Activated T-helper 2 cell treated with anti-CD3 and anti-CD28 coated beads, Interferon-gamma antibody, Interleukin-2, Interleukin-4, amounts not matched to agents 10 μg/mL and 5 μg/mL and 100 μg/mL, durations not matched to agents 14 hours and 24 hours and 36 hours (primary cell): ENCODE measurements at regions of chr12 and their contacts with region 1.

Region 1: GRCh38 chr12:110079477-110080400 is 31.4 kb upstream of the C12orf76 start:
- DNase-seq: peak; percentile 77
- H3K4me3 Mint-ChIP-seq: peak overlapping the region; percentile 57
- H3K27ac Mint-ChIP-seq: peak overlapping the region; percentile 95
- H3K4me1 Mint-ChIP-seq: peaks cover 30% of the 10 kb centered on the region
- H3K27me3 Mint-ChIP-seq: no peaks in the 10 kb centered on the region

Region 2: DNA sequence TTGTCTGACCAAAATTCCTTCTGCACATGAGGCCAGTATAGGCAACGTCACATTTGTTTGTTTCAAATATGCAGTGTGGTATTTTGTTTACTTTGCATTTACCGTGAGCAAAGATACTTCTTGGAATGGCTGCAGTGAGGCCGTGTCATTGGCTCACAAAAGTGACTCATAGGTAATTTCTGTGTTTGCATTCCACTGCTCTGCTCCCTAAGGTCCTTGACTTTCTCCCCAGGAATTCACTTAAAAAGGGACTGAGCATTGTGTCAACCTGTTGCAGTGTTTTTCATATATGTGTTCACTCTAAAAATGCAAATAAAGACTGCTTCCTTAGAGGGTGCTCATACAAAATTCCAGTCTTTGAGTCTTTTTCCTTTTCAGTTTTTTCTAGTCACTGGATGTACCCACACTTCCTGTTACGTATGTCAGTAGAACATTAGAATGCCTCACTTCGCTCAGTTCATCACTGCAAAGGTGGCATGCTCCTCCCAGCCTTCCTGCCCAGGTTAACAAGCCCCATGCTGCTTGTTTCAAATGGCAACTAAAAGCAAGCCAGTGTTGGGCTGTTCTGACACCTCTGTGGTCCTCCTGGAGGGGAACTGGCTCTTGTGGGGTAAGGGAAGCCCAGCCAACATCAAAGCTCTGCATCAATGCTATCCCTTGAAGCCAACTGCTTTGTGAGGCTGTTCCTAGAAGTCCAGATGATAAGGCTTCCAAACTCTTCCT is 40.5 kb before region 1 on chr12:
- intact Hi-C with region 1: loop called (anchors 1 kb)
- DNase-seq: no peak
- H3K4me3 Mint-ChIP-seq: no peak overlapping the region
- H3K27ac Mint-ChIP-seq: peak overlapping the region; percentile 92
- H3K4me1 Mint-ChIP-seq: peaks cover 49% of the 10 kb centered on the region
- H3K27me3 Mint-ChIP-seq: no peaks in the 10 kb centered on the region

Region 3: DNA sequence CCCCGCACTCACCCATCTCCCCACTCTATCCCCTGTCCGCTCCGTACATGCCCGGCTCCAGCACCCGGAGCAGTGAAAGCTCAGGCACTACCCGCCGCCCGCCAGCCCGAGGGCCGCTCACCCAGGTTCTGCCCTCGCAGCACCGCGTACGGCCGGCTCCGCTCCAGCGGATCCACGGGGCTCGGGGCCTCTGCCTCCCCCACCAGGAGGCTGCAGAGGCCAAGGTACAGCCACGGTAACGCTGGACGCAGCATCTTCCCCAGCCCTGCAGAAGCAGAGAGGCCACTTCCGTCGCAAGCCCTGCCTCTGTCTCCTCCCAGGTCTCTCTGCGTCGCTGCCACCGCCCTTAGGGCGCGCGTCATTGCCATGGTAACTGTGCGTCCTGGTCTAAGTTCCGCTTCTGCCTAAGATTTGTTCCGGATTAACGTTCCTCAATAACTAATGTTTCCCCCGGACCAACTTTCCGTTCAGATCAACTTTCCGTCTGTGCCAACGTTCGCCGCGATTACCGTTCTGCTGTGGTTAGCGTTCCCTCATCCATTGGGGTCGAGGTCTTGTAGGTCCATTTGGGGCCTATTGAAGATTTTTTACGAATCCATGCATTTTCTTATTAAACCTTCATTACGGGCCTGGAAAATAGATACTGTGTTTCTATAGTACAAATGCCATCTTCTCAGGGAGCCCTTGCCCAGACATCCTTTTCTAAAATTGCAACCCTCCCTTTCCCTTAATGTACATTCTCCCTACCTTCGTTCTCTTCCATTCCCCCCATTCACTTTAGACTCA is 31.3 kb before region 1 on chr12 and contains the start of gene C12orf76:
- intact Hi-C with region 1: loop called (anchors 2 kb)
- DNase-seq: peak; percentile 90
- H3K4me3 Mint-ChIP-seq: peak within 1 kb of the TSS; percentile 89
- H3K27ac Mint-ChIP-seq: peak within 1 kb of the TSS; percentile 96
- H3K4me1 Mint-ChIP-seq: peaks cover 35% of the 10 kb centered on the region
- H3K27me3 Mint-ChIP-seq: no peaks in the 10 kb centered on the region
- total RNA-seq, gene C12orf76: 24.8 and 25.2 TPM in 2 replicates

Region 4: GRCh38 chr12:110056147-110056484 is 23.6 kb before region 1 on chr12:
- intact Hi-C with region 1: loop called (anchors 1 kb)
- DNase-seq: no peak
- H3K4me3 Mint-ChIP-seq: no peak overlapping the region
- H3K27ac Mint-ChIP-seq: peak overlapping the region; percentile 95
- H3K4me1 Mint-ChIP-seq: peaks cover 50% of the 10 kb centered on the region
- H3K27me3 Mint-ChIP-seq: no peaks in the 10 kb centered on the region

Region 5: GRCh38 chr12:110065540-110065939 is 14.2 kb before region 1 on chr12:
- intact Hi-C with region 1: loop called (anchors 1 kb)
- DNase-seq: no peak
- H3K4me3 Mint-ChIP-seq: no peak overlapping the region
- H3K27ac Mint-ChIP-seq: peak overlapping the region; percentile 47
- H3K4me1 Mint-ChIP-seq: peaks cover 37% of the 10 kb centered on the region
- H3K27me3 Mint-ChIP-seq: no peaks in the 10 kb centered on the region

Region 6: GRCh38 chr12:110124184-110124995 is 44.7 kb after region 1 on chr12 and contains the start of gene IFT81:
- intact Hi-C with region 1: no loop called
- DNase-seq: peak; percentile 91
- H3K4me3 Mint-ChIP-seq: peak within 1 kb of the TSS; percentile 89
- H3K27ac Mint-ChIP-seq: peak within 1 kb of the TSS; percentile 42
- H3K4me1 Mint-ChIP-seq: peaks cover 10% of the 10 kb centered on the region
- H3K27me3 Mint-ChIP-seq: peaks cover 21% of the 10 kb centered on the region
- total RNA-seq, gene IFT81: 1.3 and 1.6 TPM in 2 replicates